ENCODE measurements at regions of chr1 and their contacts with region 1.

Region 1: DNA sequence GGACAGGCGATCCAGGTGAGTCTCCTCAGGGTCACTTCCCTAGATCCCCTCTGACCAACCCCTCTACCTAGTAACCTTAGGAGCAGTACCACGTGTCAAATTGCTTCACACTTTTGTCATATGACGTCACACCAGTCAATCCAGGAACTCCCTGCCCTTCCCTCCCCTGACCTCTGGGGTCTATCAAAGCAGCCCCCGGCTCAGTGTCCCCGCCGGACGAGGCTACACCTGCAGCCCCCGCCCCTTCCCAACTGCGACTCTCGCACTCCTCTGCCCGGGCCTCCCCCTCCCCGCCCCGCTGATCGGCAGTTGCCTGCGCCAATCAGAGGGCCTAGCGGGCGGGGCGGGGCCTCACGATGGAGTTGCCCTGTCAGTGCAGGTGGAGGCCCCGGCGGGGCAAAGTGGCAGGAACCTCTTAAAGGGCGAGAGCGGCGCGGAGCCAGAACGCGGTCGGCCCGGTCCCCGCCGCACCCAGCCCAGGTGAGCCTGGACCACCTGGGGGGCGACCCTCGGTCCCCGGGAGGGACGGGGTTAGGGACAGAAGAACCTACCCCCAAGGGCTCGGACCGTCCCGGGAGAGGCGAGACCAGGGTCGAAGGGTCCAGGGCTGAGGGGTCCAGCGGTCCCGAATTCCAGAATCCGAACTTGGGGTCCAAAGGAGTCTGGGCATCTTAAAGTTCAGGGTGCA is 27.5 kb upstream of the EPB41 start:
- DNase-seq: peak; percentile 80 to 94 (median 87)
- ATAC-seq: peak; percentile 71
- H3K4me3 ChIP-seq: peak overlapping the region; percentile 93 to 94
- H3K4me3 Mint-ChIP-seq: peak overlapping the region; percentile 87
- H3K27ac ChIP-seq: peak overlapping the region; percentile 67 to 88
- H3K27ac Mint-ChIP-seq: peak overlapping the region; percentile 96
- H3K4me1 ChIP-seq: peaks cover 41% of the 10 kb centered on the region
- H3K4me1 Mint-ChIP-seq: peaks cover 59% of the 10 kb centered on the region
- H3K27me3 ChIP-seq: no peaks in the 10 kb centered on the region
- H3K27me3 Mint-ChIP-seq: no peaks in the 10 kb centered on the region
- CTCF ChIP-seq: no peak

Region 2: DNA sequence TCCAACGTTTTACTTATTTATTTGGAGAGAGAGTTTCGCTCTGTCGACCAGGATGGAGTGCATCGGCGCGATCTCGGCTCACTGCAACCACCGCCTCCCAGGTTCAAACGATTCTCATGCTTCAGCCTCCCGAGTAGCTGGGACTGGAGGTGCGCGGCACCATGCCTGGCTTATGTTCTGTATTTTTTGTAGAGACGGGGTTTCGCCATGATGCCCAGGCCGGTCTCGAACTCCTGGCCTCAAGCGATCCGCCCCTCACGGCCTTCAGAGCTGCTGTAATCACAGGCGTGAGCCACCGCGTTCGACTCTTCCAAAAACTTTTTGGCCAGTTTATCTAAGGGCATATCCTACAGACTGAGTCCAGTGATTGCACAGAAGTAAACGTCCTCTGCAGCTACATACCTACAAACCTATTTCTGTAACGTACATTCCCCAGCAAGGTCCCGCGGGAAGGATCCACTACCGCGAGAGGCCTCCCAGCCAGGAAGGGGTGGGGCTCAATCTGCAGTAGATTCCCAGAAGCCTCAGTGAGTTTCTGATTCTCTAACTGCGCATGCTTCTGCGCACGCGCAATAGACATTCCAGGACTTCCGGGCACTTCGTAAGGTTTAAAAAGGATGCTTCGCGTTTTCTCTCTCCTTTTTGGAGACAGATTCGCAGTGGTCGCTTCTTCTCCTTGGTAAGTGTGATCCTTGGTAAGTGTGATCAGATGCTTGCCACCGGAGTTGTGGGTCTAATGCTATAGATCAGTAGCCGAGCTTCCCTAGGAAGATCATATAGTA is 381.3 kb before region 1 on chr1 and contains the start of gene RCC1:
- CTCF ChIA-PET with region 1: interaction called, 3 read pairs
- POLR2A ChIA-PET with region 1: no interaction called
- intact Hi-C with region 1: loop called in 1 of 2 experiments (anchors 5 kb)
- DNase-seq: peak; percentile 89 to 99 (median 94)
- ATAC-seq: peak; percentile 91
- H3K4me3 ChIP-seq: peak within 1 kb of the TSS; percentile 82 to 88
- H3K4me3 Mint-ChIP-seq: peak within 1 kb of the TSS; percentile 95
- H3K27ac ChIP-seq: peak within 1 kb of the TSS; percentile 77 to 85
- H3K27ac Mint-ChIP-seq: peak within 1 kb of the TSS; percentile 94
- H3K4me1 ChIP-seq: peaks cover 31% of the 10 kb centered on the region
- H3K4me1 Mint-ChIP-seq: peaks cover 45% of the 10 kb centered on the region
- H3K27me3 ChIP-seq: no peaks in the 10 kb centered on the region
- H3K27me3 Mint-ChIP-seq: no peaks in the 10 kb centered on the region
- CTCF ChIP-seq: no peak
- total RNA-seq, gene RCC1: 12.5 to 14.4 TPM

Region 3: DNA sequence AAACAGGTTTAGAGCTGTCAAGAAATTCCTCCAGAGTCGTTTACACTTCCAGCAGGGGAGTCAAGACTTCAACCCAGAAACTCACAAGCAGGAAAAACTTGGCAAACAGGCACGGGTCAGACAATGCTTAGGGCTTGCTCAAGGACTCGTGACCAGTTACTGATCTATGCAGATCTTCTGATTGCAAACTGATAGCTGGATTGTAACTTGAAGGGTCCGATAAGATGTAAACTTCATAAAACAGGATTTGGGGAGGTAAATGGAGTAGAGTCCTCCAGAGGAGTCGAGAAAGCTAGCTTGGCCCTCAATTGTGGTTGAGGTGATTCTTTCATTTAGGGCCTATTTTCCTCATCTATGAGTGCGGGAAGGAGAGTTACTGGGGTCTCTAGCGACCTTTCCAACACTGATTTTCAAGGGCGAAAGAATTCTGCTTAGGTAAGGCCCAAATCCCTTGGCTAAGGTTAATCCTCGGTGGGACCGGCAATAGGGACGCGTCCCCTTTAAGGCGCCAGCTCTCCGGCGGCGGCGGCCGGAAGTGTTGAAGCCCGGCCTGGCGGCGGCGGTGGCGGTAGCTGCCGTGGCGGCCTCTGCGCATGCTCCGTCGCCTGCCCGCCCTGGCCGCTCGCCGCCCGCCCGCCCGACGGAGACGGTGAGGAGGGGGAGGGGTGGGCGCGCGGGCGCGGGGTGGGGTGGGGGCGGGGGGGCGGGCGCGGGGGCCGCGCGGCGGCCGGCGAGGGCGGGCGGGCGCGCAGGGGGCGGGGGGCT is 218.5 kb before region 1 on chr1 and contains the start of gene GMEB1:
- CTCF ChIA-PET with region 1: no interaction called
- POLR2A ChIA-PET with region 1: interaction called, 3 read pairs
- intact Hi-C with region 1: loop called in 1 of 2 experiments (anchors 5 kb)
- DNase-seq: peak; percentile 66 to 91 (median 82)
- ATAC-seq: peak; percentile 61
- H3K4me3 ChIP-seq: peak within 1 kb of the TSS; percentile 83 to 98
- H3K4me3 Mint-ChIP-seq: peak within 1 kb of the TSS; percentile 92
- H3K27ac ChIP-seq: peak within 1 kb of the TSS; percentile 81 to 98
- H3K27ac Mint-ChIP-seq: peak within 1 kb of the TSS; percentile 97
- H3K4me1 ChIP-seq: peaks cover 9% of the 10 kb centered on the region
- H3K4me1 Mint-ChIP-seq: peaks cover 22% of the 10 kb centered on the region
- H3K27me3 ChIP-seq: no peaks in the 10 kb centered on the region
- H3K27me3 Mint-ChIP-seq: no peaks in the 10 kb centered on the region
- CTCF ChIP-seq: no peak
- total RNA-seq, gene GMEB1: 12.9 to 13.6 TPM

Region 4: GRCh38 chr1:28845786-28846543 is 40.9 kb before region 1 on chr1:
- CTCF ChIA-PET with region 1: no interaction called
- POLR2A ChIA-PET with region 1: no interaction called
- intact Hi-C with region 1: no loop called
- DNase-seq: peak in 2 of 9 experiments; percentile 12 to 21
- ATAC-seq: no peak
- H3K4me3 ChIP-seq: no peak overlapping the region
- H3K4me3 Mint-ChIP-seq: no peak overlapping the region
- H3K27ac ChIP-seq: no peak overlapping the region
- H3K27ac Mint-ChIP-seq: no peak overlapping the region
- H3K4me1 ChIP-seq: peaks cover 8% of the 10 kb centered on the region
- H3K4me1 Mint-ChIP-seq: peaks cover 8% of the 10 kb centered on the region
- H3K27me3 ChIP-seq: no peaks in the 10 kb centered on the region
- H3K27me3 Mint-ChIP-seq: peaks cover 5% of the 10 kb centered on the region
- CTCF ChIP-seq: no peak

Region 5: DNA sequence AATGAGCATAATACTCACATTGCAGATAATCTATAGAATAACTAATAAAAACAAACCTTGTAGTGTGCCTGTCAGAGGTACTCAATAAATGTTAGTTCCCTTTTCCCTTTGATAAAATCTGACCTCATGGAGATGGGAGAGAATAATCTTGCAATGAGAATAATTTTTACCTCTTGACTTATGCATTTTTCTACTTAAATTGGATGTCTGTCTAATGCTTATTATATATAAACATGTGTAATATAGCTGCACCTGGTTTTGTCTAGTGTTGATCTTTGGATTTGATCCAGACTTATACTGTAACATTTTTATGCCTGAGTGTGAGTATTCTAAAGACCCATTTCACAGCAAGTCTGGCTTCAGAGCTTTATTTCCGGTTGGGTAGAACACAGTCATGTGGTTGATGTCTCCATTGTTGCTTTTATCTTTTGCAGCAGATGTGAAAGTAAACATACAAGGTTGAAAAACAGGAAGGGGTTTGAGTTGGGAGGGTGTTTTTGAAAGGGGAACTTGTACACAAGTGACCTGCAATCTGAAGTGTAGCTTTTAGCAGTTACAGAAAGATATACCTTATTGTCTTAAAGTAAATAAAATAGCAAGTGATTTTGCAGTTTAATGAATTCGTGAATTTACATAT is 39.9 kb after region 1 on chr1:
- CTCF ChIA-PET with region 1: interaction called, 3 read pairs
- POLR2A ChIA-PET with region 1: interaction called, 4 read pairs
- intact Hi-C with region 1: loop called (anchors 1 kb)
- DNase-seq: peak in 6 of 9 experiments; percentile 21 to 91 (median 42)
- ATAC-seq: peak; percentile 78
- H3K4me3 ChIP-seq: peak overlapping the region; percentile 22 to 29
- H3K4me3 Mint-ChIP-seq: peak overlapping the region; percentile 53
- H3K27ac ChIP-seq: peak overlapping the region; percentile 36 to 82
- H3K27ac Mint-ChIP-seq: peak overlapping the region; percentile 87
- H3K4me1 ChIP-seq: peaks cover 71% of the 10 kb centered on the region
- H3K4me1 Mint-ChIP-seq: peaks cover 74% of the 10 kb centered on the region
- H3K27me3 ChIP-seq: no peaks in the 10 kb centered on the region
- H3K27me3 Mint-ChIP-seq: no peaks in the 10 kb centered on the region
- CTCF ChIP-seq: no peak

Region 6: DNA sequence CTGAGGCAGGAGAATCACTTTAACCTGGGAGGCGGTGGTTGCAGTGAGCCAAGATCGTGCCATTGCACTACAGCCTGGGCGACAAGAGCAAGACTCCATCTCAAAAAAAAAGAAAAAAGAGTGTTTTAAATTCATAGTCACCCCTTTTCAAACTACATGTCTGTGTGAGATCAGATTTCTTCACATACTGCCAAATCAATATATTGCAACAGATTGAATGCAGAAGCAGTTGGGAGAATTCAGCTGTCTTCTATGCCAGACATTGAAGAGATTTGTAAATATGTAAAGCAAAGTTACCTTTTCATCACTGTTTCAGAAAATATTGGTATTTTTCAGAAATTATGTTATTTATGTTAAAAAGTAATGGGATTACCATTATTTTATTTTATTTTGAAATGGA is 135.7 kb after region 1 on chr1:
- CTCF ChIA-PET with region 1: interaction called, 238 read pairs
- POLR2A ChIA-PET with region 1: no interaction called
- intact Hi-C with region 1: no loop called
- DNase-seq: no peak
- ATAC-seq: no peak
- H3K4me3 ChIP-seq: no peak overlapping the region
- H3K4me3 Mint-ChIP-seq: no peak overlapping the region
- H3K27ac ChIP-seq: no peak overlapping the region
- H3K27ac Mint-ChIP-seq: no peak overlapping the region
- H3K4me1 ChIP-seq: no peaks in the 10 kb centered on the region
- H3K4me1 Mint-ChIP-seq: peaks cover 9% of the 10 kb centered on the region
- H3K27me3 ChIP-seq: no peaks in the 10 kb centered on the region
- H3K27me3 Mint-ChIP-seq: no peaks in the 10 kb centered on the region
- CTCF ChIP-seq: no peak

Region 7: DNA sequence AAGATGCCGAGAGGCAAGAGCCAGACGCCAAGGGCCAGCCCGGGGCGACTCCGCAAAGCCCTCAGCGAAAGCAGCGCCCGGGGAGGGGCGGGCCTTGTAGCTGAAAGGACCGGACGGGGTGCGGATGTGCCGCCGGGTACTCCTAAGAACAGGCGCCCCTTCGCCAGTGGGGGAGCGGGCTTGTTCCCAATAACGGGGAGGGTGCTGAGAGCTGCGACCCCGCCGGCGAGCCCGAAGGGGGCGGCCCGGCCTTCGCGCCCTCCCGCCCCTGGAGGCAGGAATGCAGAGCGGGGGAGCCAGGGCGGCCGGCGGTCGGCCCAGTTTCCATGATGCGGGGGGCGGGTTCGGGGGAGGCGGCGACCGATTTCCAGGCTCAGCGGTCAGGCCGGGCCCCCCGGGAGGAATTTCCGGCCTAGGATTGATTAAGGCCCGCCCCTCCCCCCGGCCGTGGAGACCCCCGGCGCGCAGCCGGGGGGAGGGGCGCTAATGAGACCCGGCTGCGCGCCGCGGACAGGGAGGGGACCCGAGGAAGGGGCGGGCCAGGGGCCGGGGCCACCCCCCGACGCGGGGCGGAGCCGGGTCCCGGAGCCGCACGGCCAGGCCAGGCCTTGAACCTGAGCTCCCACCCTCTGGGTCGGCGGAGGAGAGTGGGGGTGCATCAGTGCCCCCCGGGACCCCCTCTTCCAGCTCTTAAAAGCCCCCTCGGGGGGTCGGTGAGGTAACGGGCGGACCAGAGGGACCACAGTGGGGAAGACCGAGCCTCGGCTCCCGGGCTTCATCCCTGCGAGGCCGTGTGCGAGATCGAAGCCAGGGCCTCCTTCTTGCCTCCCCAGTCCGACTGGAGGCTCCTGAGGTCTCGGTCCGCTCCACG is 237.7 kb after region 1 on chr1:
- CTCF ChIA-PET with region 1: interaction called, 12 read pairs
- POLR2A ChIA-PET with region 1: no interaction called
- intact Hi-C with region 1: loop called (anchors 2 to 5 kb)
- DNase-seq: peak; percentile 8 to 71 (median 50)
- ATAC-seq: peak; percentile 45
- H3K4me3 ChIP-seq: peak overlapping the region; percentile 55 to 66
- H3K4me3 Mint-ChIP-seq: peak overlapping the region; percentile 80
- H3K27ac ChIP-seq: no peak overlapping the region
- H3K27ac Mint-ChIP-seq: no peak overlapping the region
- H3K4me1 ChIP-seq: peaks cover 28% of the 10 kb centered on the region
- H3K4me1 Mint-ChIP-seq: peaks cover 13% of the 10 kb centered on the region
- H3K27me3 ChIP-seq: peaks cover 23 to 24% of the 10 kb centered on the region in 2 experiments
- H3K27me3 Mint-ChIP-seq: peaks cover 12% of the 10 kb centered on the region
- CTCF ChIP-seq: no peak